ENCODE measurements at regions of chr19 and their contacts with region 1.

Region 1: GRCh38 chr19:1074544-1075283 is 7.7 kb downstream of the ARHGAP45 start:
- DNase-seq: peak; percentile 82
- ATAC-seq: peak; percentile 37
- H3K4me3 Mint-ChIP-seq: peak overlapping the region; percentile 53
- H3K27ac Mint-ChIP-seq: peak overlapping the region; percentile 93
- H3K4me1 Mint-ChIP-seq: peaks cover 62% of the 10 kb centered on the region
- H3K27me3 Mint-ChIP-seq: no peaks in the 10 kb centered on the region
- CTCF ChIP-seq: no peak

Region 2: DNA sequence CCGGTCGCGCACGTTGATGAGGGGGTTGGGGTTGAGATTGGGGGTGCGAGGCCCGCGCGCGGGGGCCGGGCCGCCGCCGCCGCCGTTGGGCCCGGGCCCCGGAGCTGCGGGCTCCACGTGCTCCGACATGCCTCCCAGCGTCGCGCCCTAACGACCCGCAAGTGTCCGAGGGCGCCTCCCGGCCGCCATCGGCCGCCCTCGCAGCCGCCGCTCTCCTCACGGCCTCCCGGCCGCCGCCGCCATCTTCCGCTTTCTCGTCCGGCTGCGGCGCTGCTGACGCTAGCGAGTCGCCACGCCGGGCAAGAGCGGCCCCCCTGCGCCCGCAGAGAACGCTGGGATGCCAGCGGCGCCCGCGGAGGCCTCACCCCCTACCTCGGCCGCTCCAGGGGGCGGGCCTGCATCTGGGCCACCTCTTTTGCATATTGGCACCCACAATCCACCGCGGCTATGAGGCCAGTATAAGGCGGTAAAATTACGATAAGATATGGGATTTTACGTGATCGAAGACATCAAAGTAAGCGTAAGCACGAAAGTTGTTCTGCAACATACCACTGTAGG is 53.8 kb before region 1 on chr19 and contains the start of gene TMEM259:
- CTCF ChIA-PET with region 1: no interaction called
- POLR2A ChIA-PET with region 1: interaction called, 45 read pairs
- intact Hi-C with region 1: loop called (anchors 1 kb)
- DNase-seq: peak; percentile 95
- ATAC-seq: peak; percentile 87
- H3K4me3 Mint-ChIP-seq: peak within 1 kb of the TSS; percentile 87
- H3K27ac Mint-ChIP-seq: peak within 1 kb of the TSS; percentile 99
- H3K4me1 Mint-ChIP-seq: peaks cover 53% of the 10 kb centered on the region
- H3K27me3 Mint-ChIP-seq: no peaks in the 10 kb centered on the region
- CTCF ChIP-seq: no peak
- total RNA-seq, gene TMEM259: 223 and 257 TPM in 2 replicates

Region 3: DNA sequence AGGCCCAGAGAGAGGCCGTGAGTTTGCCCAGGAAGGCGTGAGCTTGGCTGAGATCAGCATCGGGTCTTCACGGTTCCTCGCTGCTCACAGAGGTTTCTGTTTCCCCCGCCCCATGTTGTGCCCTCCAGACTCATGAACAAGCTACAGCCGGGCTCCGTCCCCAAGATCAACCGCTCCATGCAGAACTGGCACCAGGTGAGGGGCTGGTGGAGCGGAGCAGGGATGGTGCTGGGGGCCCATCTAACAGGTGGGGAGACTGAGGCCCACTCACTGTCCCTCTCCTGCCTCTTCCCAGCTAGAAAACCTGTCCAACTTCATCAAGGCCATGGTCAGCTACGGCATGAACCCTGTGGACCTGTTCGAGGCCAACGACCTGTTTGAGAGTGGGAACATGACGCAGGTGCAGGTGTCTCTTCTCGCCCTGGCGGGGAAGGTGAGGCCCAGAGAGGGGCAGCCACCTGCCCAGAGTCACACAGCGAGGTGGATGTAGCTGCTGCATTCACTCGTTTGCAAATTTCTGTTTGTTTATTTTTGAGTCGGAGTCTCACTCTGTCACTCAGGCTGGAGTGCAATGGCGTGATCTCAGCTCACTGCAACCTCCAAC is 42.3 kb before region 1 on chr19:
- CTCF ChIA-PET with region 1: no interaction called
- POLR2A ChIA-PET with region 1: interaction called, 45 read pairs
- intact Hi-C with region 1: no loop called
- DNase-seq: no peak
- ATAC-seq: no peak
- H3K4me3 Mint-ChIP-seq: no peak overlapping the region
- H3K27ac Mint-ChIP-seq: no peak overlapping the region
- H3K4me1 Mint-ChIP-seq: peaks cover 36% of the 10 kb centered on the region
- H3K27me3 Mint-ChIP-seq: no peaks in the 10 kb centered on the region
- CTCF ChIP-seq: no peak

Region 4: DNA sequence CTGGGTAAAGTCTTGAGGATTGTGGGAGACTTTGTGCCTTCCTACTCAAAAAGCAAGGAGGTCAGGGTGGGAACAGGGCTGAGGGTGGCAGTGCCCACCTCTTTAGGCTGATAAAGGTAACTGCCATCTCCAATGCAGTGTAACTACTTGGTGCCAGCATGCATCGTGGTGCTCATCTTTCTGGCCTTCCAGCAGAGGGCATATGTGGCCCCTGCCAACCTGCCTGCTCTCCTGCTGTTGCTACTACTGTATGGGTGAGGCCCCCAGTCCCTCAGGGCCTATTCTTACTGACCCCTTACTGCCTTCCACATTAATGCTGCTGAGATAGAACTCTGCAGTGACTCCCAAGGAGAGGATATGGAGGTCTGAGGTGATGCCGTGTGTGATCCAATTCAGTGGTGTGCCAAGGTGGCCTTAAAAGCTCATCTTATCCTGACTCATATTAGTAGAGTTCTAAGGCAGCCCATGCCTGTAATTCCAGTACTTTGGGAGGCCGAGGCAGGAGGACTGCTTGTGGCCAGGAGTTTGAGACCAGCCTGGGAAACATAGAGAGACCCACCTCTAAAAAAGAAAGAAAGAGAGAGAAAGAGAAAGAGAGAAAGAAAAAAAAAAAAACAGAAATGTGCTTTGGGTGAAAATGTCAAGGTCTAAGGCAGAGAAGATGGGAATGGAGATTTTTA is 17.4 kb before region 1 on chr19:
- CTCF ChIA-PET with region 1: no interaction called
- POLR2A ChIA-PET with region 1: interaction called, 12 read pairs
- intact Hi-C with region 1: no loop called
- DNase-seq: no peak
- ATAC-seq: peak; percentile 70
- H3K4me3 Mint-ChIP-seq: no peak overlapping the region
- H3K27ac Mint-ChIP-seq: peak overlapping the region; percentile 83
- H3K4me1 Mint-ChIP-seq: peaks cover 23% of the 10 kb centered on the region
- H3K27me3 Mint-ChIP-seq: no peaks in the 10 kb centered on the region
- CTCF ChIP-seq: no peak

Region 5: GRCh38 chr19:1094975-1095701 is 20.4 kb after region 1 on chr19 and contains the start of gene POLR2E:
- CTCF ChIA-PET with region 1: no interaction called
- POLR2A ChIA-PET with region 1: interaction called, 184 read pairs
- intact Hi-C with region 1: no loop called
- DNase-seq: peak; percentile 98
- ATAC-seq: peak; percentile 98
- H3K4me3 Mint-ChIP-seq: peak within 1 kb of the TSS; percentile 90
- H3K27ac Mint-ChIP-seq: peak within 1 kb of the TSS; percentile 84
- H3K4me1 Mint-ChIP-seq: peaks cover 45% of the 10 kb centered on the region
- H3K27me3 Mint-ChIP-seq: no peaks in the 10 kb centered on the region
- CTCF ChIP-seq: no peak
- total RNA-seq, gene POLR2E: 173 and 184 TPM in 2 replicates

Region 6: DNA sequence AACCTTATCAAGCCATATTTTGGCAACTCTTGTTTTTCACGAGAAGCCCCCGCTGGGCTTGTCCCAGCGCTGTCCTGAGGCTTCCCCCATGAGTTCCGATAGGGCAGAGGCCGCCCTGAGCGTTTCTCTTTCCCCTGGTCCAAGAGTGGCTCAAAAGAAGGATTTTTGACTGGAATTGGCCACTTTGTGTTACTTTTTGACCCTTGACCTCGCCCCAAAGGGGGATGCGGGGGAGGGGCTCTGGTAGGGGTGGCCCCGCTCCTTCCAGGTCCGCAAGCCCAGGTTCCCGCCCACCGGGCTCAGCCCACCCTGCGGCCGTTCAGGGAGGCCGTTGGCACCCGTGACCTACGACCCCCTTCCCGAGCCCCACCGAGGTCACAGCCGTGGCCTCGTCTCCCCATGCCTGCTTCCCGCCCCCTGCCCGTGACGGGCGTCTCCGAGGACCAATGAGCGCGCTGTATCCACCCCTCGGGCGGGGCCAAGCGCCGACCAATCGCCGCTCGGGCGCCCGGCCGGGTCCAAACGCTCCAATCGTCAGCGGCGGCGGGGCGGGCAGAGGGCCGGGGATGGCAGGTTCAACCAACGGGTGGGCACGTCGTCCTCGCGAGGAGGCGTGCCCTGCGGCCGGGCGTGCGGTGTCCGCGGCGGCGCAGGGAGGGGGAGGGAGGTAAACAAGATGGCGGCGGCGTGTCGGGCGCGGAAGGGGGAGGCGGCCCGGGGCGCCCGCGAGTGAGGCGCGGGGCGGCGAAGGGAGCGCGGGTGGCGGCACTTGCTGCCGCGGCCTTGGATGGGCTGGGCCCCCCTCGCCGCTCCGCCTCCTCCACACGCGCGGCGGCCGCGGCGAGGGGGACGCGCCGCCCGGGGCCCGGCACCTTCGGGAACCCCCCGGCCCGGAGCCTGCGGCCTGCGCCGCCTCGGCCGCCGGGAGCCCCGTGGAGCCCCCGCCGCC is 130.7 kb after region 1 on chr19 and contains the start of gene STK11:
- CTCF ChIA-PET with region 1: no interaction called
- POLR2A ChIA-PET with region 1: no interaction called
- intact Hi-C with region 1: no loop called
- DNase-seq: peak; percentile 100
- ATAC-seq: peak; percentile 93
- H3K4me3 Mint-ChIP-seq: peak within 1 kb of the TSS; percentile 89
- H3K27ac Mint-ChIP-seq: peak within 1 kb of the TSS; percentile 80
- H3K4me1 Mint-ChIP-seq: peaks cover 33% of the 10 kb centered on the region
- H3K27me3 Mint-ChIP-seq: no peaks in the 10 kb centered on the region
- CTCF ChIP-seq: no peak
- total RNA-seq, gene STK11: 62.0 and 67.6 TPM in 2 replicates

Measured in activated B cell treated with CpG ODN at 0.5 μM for 24 hours (primary cell).